ENCODE measurements at regions of chr3 and their contacts with region 1.

Region 1: GRCh38 chr3:7421065-7421464 is 560.1 kb downstream of the GRM7 start:
- DNase-seq: no peak
- H3K4me3 ChIP-seq: no peak overlapping the region
- H3K27ac ChIP-seq: no peak overlapping the region
- H3K4me1 ChIP-seq: no peaks in the 10 kb centered on the region
- H3K27me3 ChIP-seq: no peaks in the 10 kb centered on the region
- CTCF ChIP-seq: peak; percentile 41; the same call in 1 of the 2 replicates

Region 2: GRCh38 chr3:7322957-7323669 is 98.0 kb before region 1 on chr3:
- CTCF ChIA-PET with region 1: no interaction called
- POLR2A ChIA-PET with region 1: no interaction called
- intact Hi-C with region 1: no loop called
- DNase-seq: no peak
- H3K4me3 ChIP-seq: no peak overlapping the region
- H3K27ac ChIP-seq: no peak overlapping the region
- H3K4me1 ChIP-seq: no peaks in the 10 kb centered on the region
- H3K27me3 ChIP-seq: no peaks in the 10 kb centered on the region
- CTCF ChIP-seq: no peak

Region 3: GRCh38 chr3:8239718-8240695 is 818.9 kb after region 1 on chr3:
- CTCF ChIA-PET with region 1: interaction called, 12 read pairs
- POLR2A ChIA-PET with region 1: no interaction called
- intact Hi-C with region 1: no loop called
- DNase-seq: peak in 1 of 2 experiments; percentile 18
- H3K4me3 ChIP-seq: no peak overlapping the region
- H3K27ac ChIP-seq: no peak overlapping the region
- H3K4me1 ChIP-seq: no peaks in the 10 kb centered on the region
- H3K27me3 ChIP-seq: no peaks in the 10 kb centered on the region
- CTCF ChIP-seq: peak; percentile 85

Measured in PC-9 (cell line).